Activated naive CD4-positive, alpha-beta T cell treated with anti-CD3 and anti-CD28 coated beads for 36 hours (primary cell): ENCODE measurements at regions of chr21 and their contacts with region 1.

Region 1: DNA sequence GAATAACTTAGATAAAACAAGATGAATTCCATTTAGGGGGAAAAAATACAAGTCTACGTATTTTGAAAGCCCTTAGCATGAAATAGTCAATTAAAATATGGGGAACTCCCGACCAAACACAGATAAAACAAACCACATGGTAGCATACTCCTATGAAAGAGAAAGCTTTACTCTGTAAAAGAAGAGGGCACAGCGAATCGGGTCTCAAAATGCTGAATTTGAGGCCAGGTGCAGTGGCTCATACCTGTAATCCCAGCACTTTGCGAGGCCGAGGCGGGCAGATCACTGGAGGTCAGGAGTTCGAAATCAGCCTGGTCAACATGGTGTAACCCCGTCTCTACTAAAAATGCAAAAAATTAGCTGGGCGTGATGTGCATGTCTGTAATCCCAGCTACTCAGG is 116.9 kb upstream of the TIAM1 start:
- DNase-seq: peak; percentile 39
- H3K4me3 Mint-ChIP-seq: peak overlapping the region; percentile 21
- H3K27ac Mint-ChIP-seq: no peak overlapping the region
- H3K4me1 Mint-ChIP-seq: peaks cover 6% of the 10 kb centered on the region
- H3K27me3 Mint-ChIP-seq: no peaks in the 10 kb centered on the region

Region 2: DNA sequence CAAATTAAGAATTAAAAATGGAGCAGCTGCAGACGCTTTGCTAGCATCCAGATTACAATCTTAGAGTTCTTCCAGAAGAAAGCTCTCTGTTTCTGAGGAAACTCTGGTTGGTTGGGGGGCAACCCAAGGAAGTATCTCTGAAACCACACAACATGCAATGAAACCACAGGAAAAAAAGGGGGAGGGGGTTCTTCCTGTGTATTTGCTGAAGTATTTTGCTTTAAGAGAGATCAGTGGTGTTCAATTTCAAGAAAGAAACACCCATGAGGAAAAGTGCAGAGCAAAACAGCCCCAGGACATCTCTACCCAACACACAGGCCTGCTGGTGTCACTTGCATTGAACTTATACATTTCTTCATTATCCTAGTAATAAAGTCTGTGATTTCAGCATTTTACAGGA is 97.3 kb before region 1 on chr21:
- CTCF ChIA-PET with region 1: no interaction called
- intact Hi-C with region 1: loop called (anchors 5 kb)
- DNase-seq: peak; percentile 28
- H3K4me3 Mint-ChIP-seq: no peak overlapping the region
- H3K27ac Mint-ChIP-seq: no peak overlapping the region
- H3K4me1 Mint-ChIP-seq: peaks cover 44% of the 10 kb centered on the region
- H3K27me3 Mint-ChIP-seq: no peaks in the 10 kb centered on the region

Region 3: DNA sequence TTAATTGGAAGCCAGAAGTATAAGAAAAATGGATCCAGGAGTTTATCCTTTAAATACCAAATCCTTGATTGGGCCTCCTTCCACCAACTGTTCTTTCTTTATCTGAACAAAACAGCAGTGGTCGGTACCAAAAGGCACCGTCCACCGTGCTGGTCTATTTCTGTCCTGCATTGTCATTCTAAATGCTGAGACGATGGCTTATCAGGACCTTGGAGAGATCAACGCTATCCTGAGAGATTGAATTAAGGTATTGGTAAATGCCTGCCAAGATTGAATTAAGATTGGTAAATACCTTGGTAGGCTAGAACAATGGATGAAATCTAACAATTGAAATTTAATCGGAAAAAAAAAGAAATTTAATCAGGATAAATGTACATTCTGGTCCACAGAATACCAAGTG is 125.1 kb after region 1 on chr21:
- CTCF ChIA-PET with region 1: no interaction called
- intact Hi-C with region 1: no loop called
- DNase-seq: no peak
- H3K4me3 Mint-ChIP-seq: no peak overlapping the region
- H3K27ac Mint-ChIP-seq: no peak overlapping the region
- H3K4me1 Mint-ChIP-seq: no peaks in the 10 kb centered on the region
- H3K27me3 Mint-ChIP-seq: no peaks in the 10 kb centered on the region